Naive thymus-derived CD4-positive, alpha-beta T cell (primary cell): ENCODE measurements at regions of chr22 and their contacts with region 1.

Region 1: DNA sequence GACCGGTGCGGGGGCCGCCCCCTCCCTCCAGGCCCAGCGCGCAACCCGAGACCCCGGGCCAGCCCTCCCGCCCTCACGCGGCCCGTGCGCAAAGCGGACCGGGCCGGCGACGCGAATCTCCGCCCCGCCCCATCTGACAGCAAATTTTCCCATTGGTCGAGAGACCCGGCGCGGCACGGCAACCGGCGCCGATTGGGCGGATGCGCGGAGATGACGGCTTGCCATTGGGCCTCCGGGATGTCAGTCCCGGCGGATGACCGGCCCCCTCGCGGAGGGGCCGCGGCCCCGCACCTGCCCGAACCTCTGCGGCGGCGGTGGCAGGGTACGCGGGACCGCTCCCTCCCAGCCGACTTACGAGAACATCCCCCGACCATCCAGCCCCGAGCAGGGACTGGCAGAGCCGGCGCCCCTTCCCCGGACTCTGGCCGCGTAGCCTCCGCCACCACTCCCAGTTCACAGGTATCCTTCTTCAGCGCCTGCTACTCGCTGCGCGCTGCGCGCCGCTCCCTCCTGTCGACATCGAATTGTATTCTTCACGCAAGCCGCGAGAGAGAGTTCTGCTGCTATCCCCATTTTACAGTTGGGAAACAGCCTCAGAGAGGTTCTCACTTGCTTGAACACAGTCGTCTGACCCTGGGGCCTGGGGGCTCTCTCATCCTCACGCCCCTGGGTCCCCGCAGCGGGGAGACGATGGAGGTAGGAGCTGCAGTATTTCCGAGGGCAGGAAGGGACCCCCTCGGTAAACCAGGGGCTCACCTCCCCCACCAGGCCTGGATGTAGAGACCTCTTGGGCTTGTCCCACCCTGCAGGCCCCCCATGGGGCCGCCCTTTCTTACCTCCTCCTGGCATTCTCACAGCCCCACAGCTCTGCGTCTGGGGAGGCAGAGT is at the start of gene ARVCF:
- DNase-seq: peak; percentile 84 to 95 (median 91)
- ATAC-seq: peak; percentile 74
- H3K4me3 ChIP-seq: peak within 1 kb of the TSS; percentile 78
- H3K4me3 Mint-ChIP-seq: peak within 1 kb of the TSS; percentile 83 to 93 (median 90)
- H3K27ac ChIP-seq: peak within 1 kb of the TSS; percentile 66
- H3K27ac Mint-ChIP-seq: peak within 1 kb of the TSS in 7 of 9 donors; percentile 40 to 81 (median 67)
- H3K4me1 ChIP-seq: peaks cover 11 to 19% of the 10 kb centered on the region in 2 donors
- H3K4me1 Mint-ChIP-seq: peaks cover 3 to 34% (median 22%) of the 10 kb centered on the region in 7 donors
- H3K27me3 ChIP-seq: no peaks in the 10 kb centered on the region
- H3K27me3 Mint-ChIP-seq: peaks cover 0 to 40% (median 0%) of the 10 kb centered on the region in 5 donors
- total RNA-seq, gene ARVCF: 2.8 to 9.2 (median 5.8) TPM

Region 2: DNA sequence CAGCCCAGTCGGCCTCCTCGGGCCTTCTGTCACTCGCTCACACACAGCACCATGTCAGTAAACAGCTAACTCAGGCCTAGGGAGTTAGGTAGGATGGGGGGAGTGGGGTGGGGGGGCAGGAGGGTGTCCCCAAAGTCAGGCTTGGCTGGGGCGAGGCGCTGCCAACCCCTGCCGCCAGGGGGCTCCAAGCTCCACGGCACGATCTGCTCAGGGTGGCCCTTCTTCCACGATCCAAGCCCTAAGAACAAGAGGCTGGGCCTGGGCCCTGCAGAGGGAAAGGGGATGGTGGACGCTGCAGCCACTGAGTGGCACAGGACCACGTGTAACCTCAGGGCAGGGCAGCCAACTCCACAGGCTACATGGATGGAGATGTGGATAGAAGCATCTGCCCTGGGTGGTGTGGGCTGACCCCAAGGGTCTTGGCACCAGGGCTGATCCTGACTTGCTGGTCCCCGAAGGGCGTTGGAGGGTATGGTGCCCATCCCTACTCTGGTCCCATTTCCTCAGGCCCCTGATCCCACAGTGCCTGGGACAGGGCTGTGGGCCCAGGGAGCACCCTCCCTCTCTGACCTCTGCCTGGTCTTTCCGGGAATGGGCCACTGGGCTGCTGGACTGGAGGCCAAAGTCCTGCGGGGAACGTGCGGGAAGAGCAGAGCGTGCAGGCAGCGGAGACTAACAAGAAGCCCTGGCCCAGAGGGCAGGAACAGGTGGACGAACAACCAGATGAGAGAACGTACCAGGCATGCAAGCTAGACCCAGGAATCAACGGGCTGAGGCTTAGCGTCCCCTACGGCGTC is 46.3 kb before region 1 on chr22:
- CTCF ChIA-PET with region 1: interaction called, 4 read pairs
- POLR2A ChIA-PET with region 1: no interaction called
- intact Hi-C with region 1: loop called in 1 of 2 experiments (anchors 1 kb)
- DNase-seq: peak; percentile 59 to 83 (median 73)
- ATAC-seq: peak; percentile 81
- H3K4me3 ChIP-seq: no peak overlapping the region
- H3K4me3 Mint-ChIP-seq: peak overlapping the region in 1 of 10 donors; percentile 52
- H3K27ac ChIP-seq: no peak overlapping the region
- H3K27ac Mint-ChIP-seq: peak overlapping the region in 2 of 9 donors; percentile 41
- H3K4me1 ChIP-seq: peaks cover 7 to 11% of the 10 kb centered on the region in 2 donors
- H3K4me1 Mint-ChIP-seq: peaks cover 12 to 35% (median 13%) of the 10 kb centered on the region in 7 donors
- H3K27me3 ChIP-seq: no peaks in the 10 kb centered on the region
- H3K27me3 Mint-ChIP-seq: no peaks in the 10 kb centered on the region

Region 3: GRCh38 chr22:20079745-20080444 is 62.9 kb after region 1 on chr22 and contains the start of gene DGCR8:
- CTCF ChIA-PET with region 1: no interaction called
- POLR2A ChIA-PET with region 1: interaction called, 5 read pairs
- intact Hi-C with region 1: loop called (anchors 1 kb)
- DNase-seq: peak; percentile 48 to 83 (median 75)
- ATAC-seq: peak; percentile 97
- H3K4me3 ChIP-seq: peak within 1 kb of the TSS; percentile 94
- H3K4me3 Mint-ChIP-seq: peak within 1 kb of the TSS; percentile 86 to 96 (median 90)
- H3K27ac ChIP-seq: peak within 1 kb of the TSS; percentile 74
- H3K27ac Mint-ChIP-seq: peak within 1 kb of the TSS; percentile 65 to 95 (median 81)
- H3K4me1 ChIP-seq: peaks cover 12 to 23% of the 10 kb centered on the region in 2 donors
- H3K4me1 Mint-ChIP-seq: peaks cover 29 to 45% (median 41%) of the 10 kb centered on the region in 7 donors
- H3K27me3 ChIP-seq: no peaks in the 10 kb centered on the region
- H3K27me3 Mint-ChIP-seq: no peaks in the 10 kb centered on the region
- total RNA-seq, gene DGCR8: 33.4 to 63.6 (median 41.1) TPM

Region 4: GRCh38 chr22:20130739-20131596 is 114.0 kb after region 1 on chr22:
- CTCF ChIA-PET with region 1: no interaction called
- POLR2A ChIA-PET with region 1: interaction called, 6 read pairs
- intact Hi-C with region 1: loop called (anchors 1 kb)
- DNase-seq: peak; percentile 65 to 77 (median 72)
- ATAC-seq: peak; percentile 88
- H3K4me3 ChIP-seq: peak overlapping the region; percentile 73
- H3K4me3 Mint-ChIP-seq: peak overlapping the region in 8 of 10 donors; percentile 17 to 75 (median 69)
- H3K27ac ChIP-seq: peak overlapping the region; percentile 91
- H3K27ac Mint-ChIP-seq: peak overlapping the region in 6 of 9 donors; percentile 36 to 82 (median 68)
- H3K4me1 ChIP-seq: peaks cover 14 to 20% of the 10 kb centered on the region in 2 donors
- H3K4me1 Mint-ChIP-seq: peaks cover 0 to 33% (median 23%) of the 10 kb centered on the region in 7 donors
- H3K27me3 ChIP-seq: no peaks in the 10 kb centered on the region
- H3K27me3 Mint-ChIP-seq: no peaks in the 10 kb centered on the region